Common myeloid progenitor, CD34-positive (primary cell): ENCODE measurements at regions of chr2 and their contacts with region 1.

Region 1: GRCh38 chr2:10434886-10435819 is 13.0 kb downstream of the ODC1 start:
- DNase-seq: peak; percentile 79 to 88 (median 85)
- H3K4me3 ChIP-seq: no peak overlapping the region
- H3K27ac ChIP-seq: no peak overlapping the region
- H3K4me1 ChIP-seq: peaks cover 0 to 14% (median 11%) of the 10 kb centered on the region in 4 experiments
- H3K27me3 ChIP-seq: peaks cover 0 to 13% (median 0%) of the 10 kb centered on the region in 5 experiments

Region 2: DNA sequence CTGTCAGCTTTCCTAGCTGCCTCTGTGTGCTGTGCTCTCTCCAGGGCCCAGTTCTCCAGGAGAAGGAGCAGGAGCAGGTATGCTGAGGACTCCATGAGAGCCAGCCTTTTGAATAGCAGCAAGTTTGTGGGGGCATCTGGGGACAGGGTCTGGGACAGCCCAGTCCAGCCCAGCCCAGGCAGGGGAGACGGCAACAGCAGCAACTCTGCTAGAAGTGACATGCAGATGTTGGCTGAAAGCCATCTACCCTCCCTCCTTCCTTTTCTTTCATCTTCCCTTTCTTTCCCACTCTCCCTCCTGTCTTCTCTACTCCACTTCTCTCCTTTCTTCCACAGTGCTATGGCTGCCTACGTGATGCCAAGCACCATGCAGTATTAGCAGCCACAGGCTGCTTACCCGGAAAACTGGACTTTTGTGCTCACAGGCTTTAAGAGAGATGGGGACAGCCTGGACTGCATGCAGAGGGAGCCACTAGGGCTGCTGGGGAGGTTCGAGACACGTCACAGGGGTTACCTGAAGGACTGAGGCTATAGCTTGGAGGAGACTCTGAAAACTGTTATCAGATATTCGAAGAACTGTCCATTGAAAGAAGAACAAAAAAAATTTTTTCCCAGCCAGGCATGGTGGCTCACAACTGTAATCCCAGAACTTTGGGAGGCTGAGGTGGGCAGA is 780.6 kb before region 1 on chr2:
- CTCF ChIA-PET with region 1: no interaction called
- POLR2A ChIA-PET with region 1: no interaction called
- DNase-seq: no peak
- H3K4me3 ChIP-seq: no peak overlapping the region
- H3K27ac ChIP-seq: no peak overlapping the region
- H3K4me1 ChIP-seq: no peaks in the 10 kb centered on the region
- H3K27me3 ChIP-seq: no peaks in the 10 kb centered on the region

Region 3: DNA sequence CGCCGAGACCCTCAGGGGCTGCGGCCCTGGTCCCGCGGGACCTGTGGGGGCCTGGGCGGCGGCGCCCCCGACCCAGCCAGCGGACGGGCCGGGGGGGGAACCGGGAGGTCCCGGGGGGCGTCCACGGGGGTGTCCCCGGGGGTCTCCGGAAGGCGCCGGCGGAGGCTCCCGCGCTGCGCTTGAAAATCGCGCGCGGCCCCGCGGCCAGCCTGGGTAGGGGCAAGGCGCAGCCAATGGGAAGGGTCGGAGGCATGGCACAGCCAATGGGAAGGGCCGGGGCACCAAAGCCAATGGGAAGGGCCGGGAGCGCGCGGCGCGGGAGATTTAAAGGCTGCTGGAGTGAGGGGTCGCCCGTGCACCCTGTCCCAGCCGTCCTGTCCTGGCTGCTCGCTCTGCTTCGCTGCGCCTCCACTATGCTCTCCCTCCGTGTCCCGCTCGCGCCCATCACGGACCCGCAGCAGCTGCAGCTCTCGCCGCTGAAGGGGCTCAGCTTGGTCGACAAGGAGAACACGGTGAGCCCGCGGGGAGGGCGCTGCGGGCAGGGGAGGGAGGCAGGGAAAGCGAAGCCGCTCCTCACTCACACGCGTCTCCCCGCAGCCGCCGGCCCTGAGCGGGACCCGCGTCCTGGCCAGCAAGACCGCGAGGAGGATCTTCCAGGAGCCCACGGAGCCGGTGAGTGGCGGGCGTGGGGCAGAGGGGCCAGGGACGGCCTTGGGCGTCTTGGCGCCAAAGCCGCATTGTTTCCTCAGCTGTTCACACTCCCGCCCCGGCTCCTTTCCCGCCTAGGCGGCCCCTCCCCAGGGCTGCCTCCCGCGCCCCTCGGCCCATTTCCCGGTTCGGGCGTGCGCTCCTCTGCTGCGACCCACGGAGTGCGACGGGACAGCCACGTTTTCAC is 312.5 kb before region 1 on chr2 and contains the start of gene RRM2:
- CTCF ChIA-PET with region 1: interaction called, 80 read pairs
- POLR2A ChIA-PET with region 1: interaction called, 3 read pairs
- DNase-seq: peak; percentile 85 to 94 (median 93)
- H3K4me3 ChIP-seq: peak within 1 kb of the TSS; percentile 54 to 94 (median 82)
- H3K27ac ChIP-seq: peak within 1 kb of the TSS in 1 of 2 experiments; percentile 77
- H3K4me1 ChIP-seq: peaks cover 12 to 66% (median 48%) of the 10 kb centered on the region in 4 experiments
- H3K27me3 ChIP-seq: no peaks in the 10 kb centered on the region

Region 4: DNA sequence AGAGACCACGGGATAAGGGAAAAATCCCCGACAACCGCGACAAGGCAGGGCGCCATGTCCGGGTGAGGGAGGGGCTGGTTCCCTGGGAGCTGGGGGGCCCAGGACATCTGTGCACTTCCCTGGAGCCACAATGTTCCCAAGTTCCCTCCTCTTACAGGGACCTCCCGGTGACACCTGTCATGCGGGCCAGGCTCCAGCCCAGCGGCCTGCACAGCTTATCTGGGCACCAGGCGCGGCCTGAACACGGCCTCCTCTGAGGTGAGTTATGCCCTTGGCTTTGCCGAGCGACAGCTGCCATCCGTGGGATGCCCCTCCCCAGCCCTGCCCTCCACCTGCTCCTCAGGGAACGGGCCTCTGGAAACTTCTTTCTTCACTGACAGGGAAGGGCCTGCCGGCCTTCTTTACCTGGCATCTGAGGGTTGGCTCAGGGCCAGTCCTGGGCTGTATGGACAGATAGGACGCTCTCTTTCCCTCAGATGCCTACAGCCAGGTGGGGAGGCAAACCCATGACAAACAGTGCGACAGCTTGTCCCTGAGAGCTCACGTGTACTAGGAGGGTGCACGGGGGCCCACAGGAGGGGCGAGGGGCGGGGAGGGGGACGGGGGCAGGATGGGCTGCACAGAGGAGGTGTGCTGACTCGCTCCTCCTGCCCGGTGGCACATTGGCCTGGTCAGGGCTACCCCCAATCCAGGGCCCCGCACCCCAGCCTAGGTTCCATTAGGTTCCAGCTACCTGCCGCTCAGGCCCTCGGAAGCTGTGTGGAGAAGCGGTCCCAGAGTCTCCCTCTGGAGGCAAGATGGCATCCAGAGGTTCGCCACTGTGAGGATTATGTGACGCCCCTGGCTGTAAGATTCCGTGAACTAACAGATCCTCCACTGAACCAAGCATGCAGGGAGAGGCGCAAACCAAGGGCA is 167.3 kb before region 1 on chr2:
- CTCF ChIA-PET with region 1: interaction called, 65 read pairs
- POLR2A ChIA-PET with region 1: no interaction called
- DNase-seq: no peak
- H3K4me3 ChIP-seq: no peak overlapping the region
- H3K27ac ChIP-seq: no peak overlapping the region
- H3K4me1 ChIP-seq: peaks cover 0 to 10% (median 8%) of the 10 kb centered on the region in 4 experiments
- H3K27me3 ChIP-seq: no peaks in the 10 kb centered on the region

Region 5: DNA sequence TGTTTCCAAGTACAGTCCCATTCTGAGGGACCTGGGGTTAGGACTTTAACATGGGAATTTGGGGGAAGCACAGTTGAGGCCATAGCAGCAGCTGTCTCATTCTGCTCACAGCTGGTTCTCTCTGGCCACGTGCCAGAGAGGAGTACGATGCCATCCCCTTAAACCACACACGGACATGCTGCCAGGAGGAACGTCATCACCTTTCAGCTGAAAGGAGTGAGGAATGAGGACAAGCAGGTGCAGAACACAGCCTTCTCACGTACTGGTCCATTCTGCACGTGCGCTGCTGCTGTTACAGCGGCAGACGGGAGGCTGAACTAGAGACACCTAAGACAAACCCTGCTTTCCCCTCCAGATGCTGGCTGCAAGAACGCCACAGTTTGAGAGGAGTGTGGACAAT is 20.6 kb before region 1 on chr2:
- CTCF ChIA-PET with region 1: interaction called, 42 read pairs
- POLR2A ChIA-PET with region 1: no interaction called
- DNase-seq: no peak
- H3K4me3 ChIP-seq: no peak overlapping the region
- H3K27ac ChIP-seq: no peak overlapping the region
- H3K4me1 ChIP-seq: peaks cover 5 to 23% (median 20%) of the 10 kb centered on the region in 4 experiments
- H3K27me3 ChIP-seq: no peaks in the 10 kb centered on the region